ENCODE measurements at regions of chr7 and their contacts with region 1.

Region 1: GRCh38 chr7:18475488-18475887 is 20.1 kb upstream of the HDAC9 start:
- DNase-seq: no peak
- CTCF ChIP-seq: no peak

Region 2: GRCh38 chr7:18461785-18462467 is 13.6 kb before region 1 on chr7:
- CTCF ChIA-PET with region 1: no interaction called
- POLR2A ChIA-PET with region 1: no interaction called
- DNase-seq: no peak
- CTCF ChIP-seq: no peak

Region 3: DNA sequence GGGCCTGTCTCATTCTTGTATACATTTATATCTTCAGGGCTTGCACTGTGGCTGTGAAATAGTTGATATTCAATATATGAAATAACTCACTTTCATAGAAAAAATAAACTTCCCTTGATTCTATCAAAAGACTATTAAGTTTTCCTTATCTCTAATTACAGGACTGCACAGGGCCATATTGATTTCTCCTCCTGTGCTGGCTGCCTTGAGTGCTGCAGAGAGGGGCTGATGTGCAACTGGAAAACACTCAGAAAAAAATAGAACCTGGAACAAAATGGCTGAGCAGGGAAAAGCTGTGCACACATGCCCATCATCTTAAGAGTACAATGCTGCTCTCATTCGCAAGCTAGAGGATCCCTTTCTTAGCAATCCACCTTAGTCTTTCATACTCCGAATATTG is 14.1 kb after region 1 on chr7:
- CTCF ChIA-PET with region 1: interaction called, 10 read pairs
- POLR2A ChIA-PET with region 1: no interaction called
- DNase-seq: no peak
- CTCF ChIP-seq: no peak

Region 4: GRCh38 chr7:18846765-18847215 is 371.3 kb after region 1 on chr7:
- CTCF ChIA-PET with region 1: no interaction called
- POLR2A ChIA-PET with region 1: no interaction called
- DNase-seq: no peak
- CTCF ChIP-seq: no peak